Endothelial cell of umbilical vein (primary cell): ENCODE measurements at regions of chr7 and their contacts with region 1.

Region 1: DNA sequence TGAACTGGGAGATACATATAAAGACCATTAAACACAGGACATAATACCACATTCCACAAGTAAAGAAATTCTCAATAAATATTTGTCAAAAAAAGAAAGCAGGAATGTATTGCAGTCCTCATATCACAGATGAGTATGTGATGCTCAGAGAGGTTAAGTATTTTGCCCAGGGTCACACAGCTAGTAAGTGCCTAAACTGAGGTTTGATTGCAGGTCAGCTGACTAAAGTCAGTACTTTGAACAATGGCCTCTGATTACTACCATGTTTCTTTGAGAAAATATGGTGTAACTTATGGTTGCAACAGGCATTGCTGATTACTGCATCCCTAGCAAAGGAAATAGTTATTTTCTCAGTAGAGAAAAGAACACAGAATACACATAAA is 267.1 kb downstream of the ELMO1 start:
- DNase-seq: no peak
- H3K4me3 ChIP-seq: no peak overlapping the region
- H3K27ac ChIP-seq: no peak overlapping the region
- H3K4me1 ChIP-seq: no peaks in the 10 kb centered on the region
- H3K27me3 ChIP-seq: no peaks in the 10 kb centered on the region
- CTCF ChIP-seq: no peak
- POLR2A ChIP-seq: no peak

Region 2: GRCh38 chr7:36440880-36441279 is 740.7 kb before region 1 on chr7:
- CTCF ChIA-PET with region 1: interaction called, 28 read pairs
- POLR2A ChIA-PET with region 1: no interaction called
- dilution Hi-C with region 1: no loop called
- intact Hi-C with region 1: loop called (anchors 5 kb)
- DNase-seq: peak; percentile 48
- H3K4me3 ChIP-seq: no peak overlapping the region
- H3K27ac ChIP-seq: no peak overlapping the region
- H3K4me1 ChIP-seq: no peaks in the 10 kb centered on the region
- H3K27me3 ChIP-seq: no peaks in the 10 kb centered on the region
- CTCF ChIP-seq: peak in 1 of 2 donors; percentile 12
- POLR2A ChIP-seq: no peak

Region 3: DNA sequence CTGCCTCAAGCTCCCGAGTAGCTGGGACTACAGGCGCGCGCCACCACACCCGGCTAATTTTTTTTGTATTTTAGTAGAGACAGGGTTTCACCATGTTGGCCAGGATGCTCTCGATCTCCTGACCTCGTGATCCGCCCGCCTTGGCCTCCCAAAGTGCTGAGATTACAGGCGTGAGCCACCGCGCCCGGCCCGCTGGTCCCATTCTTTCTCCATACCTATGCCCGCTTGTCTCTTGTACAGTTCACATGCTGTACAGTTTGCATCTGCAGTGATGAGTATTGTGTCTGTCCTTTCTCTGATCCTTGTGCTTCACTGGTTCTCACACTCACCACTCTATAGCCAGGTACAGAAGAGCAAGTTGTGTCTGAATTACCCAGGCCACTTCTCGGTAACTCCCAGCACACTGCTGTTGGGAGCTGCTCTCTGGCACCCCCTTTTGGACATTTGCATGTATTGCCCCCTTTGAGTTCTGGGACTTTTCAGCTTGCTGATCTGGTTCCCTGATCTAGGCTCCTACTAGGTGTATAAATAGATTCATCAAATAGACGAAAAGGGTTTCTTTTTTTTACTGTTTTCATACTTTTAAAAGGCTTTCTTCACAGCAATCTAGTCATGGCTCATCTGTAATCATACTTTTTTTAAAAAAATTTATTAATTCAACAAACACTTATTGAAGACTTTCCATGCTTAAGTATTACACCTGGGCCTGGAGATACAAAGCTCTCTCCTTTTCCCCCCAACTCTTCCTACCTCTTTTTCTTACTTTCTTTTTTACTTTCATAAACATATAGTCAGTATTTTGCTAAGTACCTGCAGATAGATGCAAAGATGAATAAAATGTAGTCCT is 510.7 kb before region 1 on chr7:
- CTCF ChIA-PET with region 1: interaction called, 31 read pairs
- POLR2A ChIA-PET with region 1: no interaction called
- dilution Hi-C with region 1: no loop called
- intact Hi-C with region 1: loop called (anchors 2 kb)
- DNase-seq: peak; percentile 69
- H3K4me3 ChIP-seq: no peak overlapping the region
- H3K27ac ChIP-seq: no peak overlapping the region
- H3K4me1 ChIP-seq: no peaks in the 10 kb centered on the region
- H3K27me3 ChIP-seq: no peaks in the 10 kb centered on the region
- CTCF ChIP-seq: peak; percentile 87 to 90
- POLR2A ChIP-seq: no peak

Region 4: GRCh38 chr7:36977878-36978277 is 203.7 kb before region 1 on chr7:
- CTCF ChIA-PET with region 1: interaction called, 374 read pairs
- POLR2A ChIA-PET with region 1: no interaction called
- dilution Hi-C with region 1: loop called (anchors 25 kb)
- intact Hi-C with region 1: no loop called
- DNase-seq: no peak
- H3K4me3 ChIP-seq: no peak overlapping the region
- H3K27ac ChIP-seq: no peak overlapping the region
- H3K4me1 ChIP-seq: no peaks in the 10 kb centered on the region
- H3K27me3 ChIP-seq: no peaks in the 10 kb centered on the region
- CTCF ChIP-seq: no peak
- POLR2A ChIP-seq: no peak

Region 5: DNA sequence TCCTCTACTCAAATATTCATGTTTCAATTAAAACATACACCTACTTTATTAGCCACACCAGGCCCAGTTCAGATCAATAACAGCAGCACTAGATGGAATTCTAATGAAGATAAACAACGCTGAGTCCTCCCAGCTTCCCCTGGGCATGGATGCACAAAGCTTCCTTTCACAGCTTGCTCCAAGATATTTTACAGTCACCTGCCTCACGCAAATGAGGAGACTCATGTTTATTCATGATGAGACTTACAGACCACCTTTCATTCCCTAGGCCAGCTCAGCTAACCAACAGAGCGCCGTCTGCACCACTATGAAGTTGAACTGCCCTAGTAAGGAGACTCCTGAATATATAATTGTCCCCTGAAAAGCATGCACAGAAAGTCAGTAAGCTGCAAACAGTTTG is 174.3 kb before region 1 on chr7:
- CTCF ChIA-PET with region 1: interaction called, 13 read pairs
- POLR2A ChIA-PET with region 1: no interaction called
- dilution Hi-C with region 1: no loop called
- intact Hi-C with region 1: no loop called
- DNase-seq: no peak
- H3K4me3 ChIP-seq: no peak overlapping the region
- H3K27ac ChIP-seq: no peak overlapping the region
- H3K4me1 ChIP-seq: no peaks in the 10 kb centered on the region
- H3K27me3 ChIP-seq: no peaks in the 10 kb centered on the region
- CTCF ChIP-seq: no peak
- POLR2A ChIP-seq: no peak

Region 6: DNA sequence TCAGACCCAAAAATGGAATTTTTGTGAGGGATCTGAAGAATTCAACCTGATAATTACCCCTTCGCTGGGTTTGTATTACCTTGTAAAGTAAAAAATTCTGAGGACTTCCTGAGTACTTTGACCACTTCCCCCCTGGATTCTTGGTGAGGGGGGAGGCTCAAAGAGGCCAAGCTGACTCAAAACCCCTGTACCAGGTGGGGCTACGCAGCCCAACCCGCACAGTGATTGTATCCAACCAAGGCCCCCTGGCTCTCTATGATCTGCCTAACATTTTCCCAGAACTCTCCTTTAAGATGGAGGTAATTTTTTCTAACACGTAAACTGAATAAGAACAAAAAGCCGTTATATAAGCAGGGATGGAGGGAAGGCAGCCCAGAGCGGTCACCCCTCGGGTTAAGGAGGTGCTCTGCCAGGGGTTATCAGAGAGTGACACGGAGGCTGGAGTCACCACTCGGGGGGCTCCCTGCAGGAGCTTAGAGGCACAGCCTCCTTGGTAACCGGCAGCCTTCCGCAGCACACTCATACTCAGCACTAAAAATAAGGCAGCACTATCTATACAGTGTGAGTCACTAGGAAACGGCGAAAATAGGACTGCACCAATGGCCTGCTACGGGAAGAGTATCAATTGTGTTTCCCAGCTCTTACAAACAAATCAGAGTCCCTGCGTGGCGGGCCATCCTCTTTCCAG is 11.7 kb after region 1 on chr7:
- CTCF ChIA-PET with region 1: interaction called, 49 read pairs
- POLR2A ChIA-PET with region 1: no interaction called
- dilution Hi-C with region 1: no loop called
- intact Hi-C with region 1: no loop called
- DNase-seq: peak; percentile 56
- H3K4me3 ChIP-seq: no peak overlapping the region
- H3K27ac ChIP-seq: peak overlapping the region; percentile 5
- H3K4me1 ChIP-seq: no peaks in the 10 kb centered on the region
- H3K27me3 ChIP-seq: no peaks in the 10 kb centered on the region
- CTCF ChIP-seq: no peak
- POLR2A ChIP-seq: no peak